WTC11 (cell line): ENCODE measurements at regions of chr11 and their contacts with region 1.

Region 1: GRCh38 chr11:910589-911195 is at the start of gene CHID1:
- DNase-seq: peak; percentile 89
- ATAC-seq: peak; percentile 95
- H3K4me3 Mint-ChIP-seq: peak within 1 kb of the TSS; percentile 85
- H3K27ac Mint-ChIP-seq: peak within 1 kb of the TSS; percentile 81
- H3K4me1 Mint-ChIP-seq: peaks cover 12% of the 10 kb centered on the region
- H3K27me3 Mint-ChIP-seq: no peaks in the 10 kb centered on the region
- CTCF ChIP-seq: no peak
- total RNA-seq, gene CHID1: 92.8 to 99.6 TPM (median 94.2 TPM) in 3 replicates

Region 2: DNA sequence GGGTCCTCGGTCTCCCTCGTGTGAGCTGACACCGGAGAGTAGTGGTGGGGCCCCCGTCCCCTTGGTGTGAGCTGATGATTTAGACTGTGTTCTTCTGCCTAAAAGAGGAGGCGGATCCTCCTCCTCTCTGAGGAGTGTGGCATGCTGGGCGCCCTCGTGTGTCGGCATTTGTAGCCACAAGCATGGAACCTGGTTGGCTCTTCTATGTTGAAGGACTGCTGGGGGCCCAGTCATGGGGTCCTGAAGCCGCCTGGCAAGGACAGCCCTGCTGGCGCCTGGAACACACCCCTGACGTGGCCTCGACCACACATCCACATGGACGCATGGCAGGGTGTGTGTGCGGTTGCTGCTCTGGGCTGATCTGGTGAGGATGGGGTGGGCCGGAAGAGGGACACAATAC is 65.1 kb after region 1 on chr11:
- CTCF ChIA-PET with region 1: interaction called, 20 read pairs
- POLR2A ChIA-PET with region 1: interaction called, 4 read pairs
- DNase-seq: peak; percentile 72
- ATAC-seq: peak; percentile 89
- H3K4me3 Mint-ChIP-seq: no peak overlapping the region
- H3K27ac Mint-ChIP-seq: peak overlapping the region; percentile 68
- H3K4me1 Mint-ChIP-seq: peaks cover 12% of the 10 kb centered on the region
- H3K27me3 Mint-ChIP-seq: no peaks in the 10 kb centered on the region
- CTCF ChIP-seq: no peak